ENCODE measurements at regions of chr7 and their contacts with region 1.

Region 1: GRCh38 chr7:2072042-2072441 is 160.7 kb downstream of the MAD1L1 start:
- DNase-seq: peak; percentile 79
- ATAC-seq: peak; percentile 90
- H3K4me3 ChIP-seq: no peak overlapping the region
- H3K4me3 Mint-ChIP-seq: peak overlapping the region; percentile 78
- H3K27ac ChIP-seq: peak overlapping the region in 1 of 2 donors; percentile 48
- H3K27ac Mint-ChIP-seq: peak overlapping the region; percentile 90
- H3K4me1 ChIP-seq: peaks cover 30 to 55% of the 10 kb centered on the region in 2 donors
- H3K4me1 Mint-ChIP-seq: peaks cover 45% of the 10 kb centered on the region
- H3K27me3 ChIP-seq: no peaks in the 10 kb centered on the region
- H3K27me3 Mint-ChIP-seq: no peaks in the 10 kb centered on the region
- CTCF ChIP-seq: no peak

Region 2: GRCh38 chr7:738755-739454 is 1333.1 kb before region 1 on chr7:
- CTCF ChIA-PET with region 1: no interaction called
- POLR2A ChIA-PET with region 1: no interaction called
- intact Hi-C with region 1: no loop called
- DNase-seq: no peak
- ATAC-seq: no peak
- H3K4me3 ChIP-seq: no peak overlapping the region
- H3K4me3 Mint-ChIP-seq: no peak overlapping the region
- H3K27ac ChIP-seq: no peak overlapping the region
- H3K27ac Mint-ChIP-seq: no peak overlapping the region
- H3K4me1 ChIP-seq: no peaks in the 10 kb centered on the region
- H3K4me1 Mint-ChIP-seq: no peaks in the 10 kb centered on the region
- H3K27me3 ChIP-seq: no peaks in the 10 kb centered on the region
- H3K27me3 Mint-ChIP-seq: no peaks in the 10 kb centered on the region
- CTCF ChIP-seq: no peak

Region 3: DNA sequence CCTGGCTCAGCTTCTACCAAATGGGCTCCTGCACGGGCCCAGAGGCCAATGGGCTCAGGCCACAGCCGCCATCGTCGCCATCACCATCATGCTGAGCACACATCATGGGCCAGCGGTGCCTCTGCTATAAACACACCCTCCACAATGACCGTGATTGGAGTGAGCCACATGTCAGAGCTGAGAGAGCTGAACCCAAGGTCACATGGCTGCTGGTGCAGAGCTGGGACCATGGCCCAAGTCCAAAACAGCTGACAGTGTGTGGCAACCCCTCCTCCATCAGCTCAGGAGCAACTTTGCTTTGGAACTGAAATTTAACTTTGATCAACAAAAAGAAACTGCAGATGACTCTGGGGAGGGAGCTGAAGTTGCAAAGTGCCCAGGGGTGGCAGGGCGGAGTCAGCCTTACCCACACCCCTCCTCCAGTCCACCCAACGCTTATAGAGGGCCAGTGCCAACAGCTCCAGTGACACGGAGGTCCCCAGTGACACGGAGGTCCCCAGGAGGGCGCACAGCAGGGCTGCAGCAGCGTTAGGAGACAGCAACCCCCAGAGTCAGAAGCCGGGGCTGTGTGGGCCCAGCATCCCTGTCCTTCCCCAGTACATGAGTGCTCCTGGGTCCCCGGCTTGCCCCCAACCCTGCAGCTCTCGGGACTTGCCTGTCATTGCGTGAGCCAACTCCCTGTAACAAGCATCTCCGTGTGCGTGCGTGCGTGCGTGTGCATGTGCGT is 152.3 kb before region 1 on chr7:
- CTCF ChIA-PET with region 1: no interaction called
- POLR2A ChIA-PET with region 1: no interaction called
- intact Hi-C with region 1: loop called (anchors 10 kb)
- DNase-seq: no peak
- ATAC-seq: peak; percentile 38
- H3K4me3 ChIP-seq: peak overlapping the region; percentile 4 to 46 (median 39)
- H3K4me3 Mint-ChIP-seq: peak overlapping the region; percentile 88
- H3K27ac ChIP-seq: peak overlapping the region in 1 of 2 donors; percentile 19
- H3K27ac Mint-ChIP-seq: peak overlapping the region; percentile 66
- H3K4me1 ChIP-seq: peaks cover 26 to 32% of the 10 kb centered on the region in 2 donors
- H3K4me1 Mint-ChIP-seq: peaks cover 34% of the 10 kb centered on the region
- H3K27me3 ChIP-seq: no peaks in the 10 kb centered on the region
- H3K27me3 Mint-ChIP-seq: no peaks in the 10 kb centered on the region
- CTCF ChIP-seq: no peak

Region 4: GRCh38 chr7:2037808-2038522 is 34.1 kb before region 1 on chr7:
- CTCF ChIA-PET with region 1: no interaction called
- POLR2A ChIA-PET with region 1: interaction called, 7 read pairs
- intact Hi-C with region 1: loop called (anchors 2 kb)
- DNase-seq: peak; percentile 79
- ATAC-seq: peak; percentile 65
- H3K4me3 ChIP-seq: peak overlapping the region; percentile 16 to 90 (median 57)
- H3K4me3 Mint-ChIP-seq: peak overlapping the region; percentile 93
- H3K27ac ChIP-seq: peak overlapping the region; percentile 74 to 84
- H3K27ac Mint-ChIP-seq: peak overlapping the region; percentile 88
- H3K4me1 ChIP-seq: peaks cover 54 to 60% of the 10 kb centered on the region in 2 donors
- H3K4me1 Mint-ChIP-seq: peaks cover 65% of the 10 kb centered on the region
- H3K27me3 ChIP-seq: no peaks in the 10 kb centered on the region
- H3K27me3 Mint-ChIP-seq: no peaks in the 10 kb centered on the region
- CTCF ChIP-seq: no peak

Measured in B cell (primary cell).